HepG2 (cell line): ENCODE measurements at regions of chr17 and their contacts with region 1.

Region 1: DNA sequence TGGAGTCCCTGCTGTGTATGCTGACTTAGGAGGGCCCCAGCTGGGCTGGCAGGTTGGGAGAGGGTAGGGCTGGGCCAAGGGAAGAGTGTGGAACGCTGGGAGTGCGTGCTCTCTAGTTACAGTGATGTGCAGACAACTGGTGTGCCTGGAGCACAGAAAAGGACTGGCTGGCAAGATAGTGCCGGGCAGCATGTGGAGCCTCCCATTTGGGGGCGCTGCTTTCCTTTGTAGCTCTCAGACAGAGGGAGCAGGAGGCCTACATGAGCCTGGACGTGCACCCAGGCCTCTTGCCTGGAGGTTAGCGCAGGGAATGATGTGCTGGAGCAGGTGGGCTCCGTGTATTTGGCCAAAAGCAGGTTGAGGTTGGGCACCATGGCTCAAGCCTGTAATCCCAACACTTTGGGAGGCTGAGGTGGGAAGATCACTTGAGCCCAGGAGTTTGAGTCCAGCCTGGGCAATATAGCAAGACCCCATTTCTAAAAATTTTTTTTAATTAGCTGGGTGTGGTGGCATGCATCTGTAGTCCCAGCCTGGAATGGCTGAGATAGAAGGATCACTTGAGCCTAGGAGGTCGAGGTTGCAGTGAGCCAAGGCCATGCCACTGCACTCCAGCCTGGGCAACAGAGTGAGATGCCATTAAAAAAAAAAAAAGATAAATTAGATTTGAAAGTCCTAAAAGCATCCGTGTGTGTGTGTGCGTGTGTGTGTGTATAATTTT is 26.1 kb upstream of the TBX4 start:
- DNase-seq: peak; percentile 85
- ATAC-seq: peak; percentile 94
- H3K4me3 ChIP-seq: 0 out of 6 replicates have a peak overlapping the region, but pooled peaks of 1 of the 3 experiments have one; percentile 23
- H3K27ac ChIP-seq: peak overlapping the region; percentile 57
- H3K4me1 ChIP-seq: peaks cover 41% of the 10 kb centered on the region
- H3K27me3 ChIP-seq: no peaks in the 10 kb centered on the region
- CTCF ChIP-seq: peak; percentile 98
- EP300 ChIP-seq: 0 out of 4 replicates have a peak, but pooled peaks of 1 of the 2 experiments have one; percentile 28
- POLR2A ChIP-seq: no peak
- RAD21 ChIP-seq: peak; percentile 97

Region 2: DNA sequence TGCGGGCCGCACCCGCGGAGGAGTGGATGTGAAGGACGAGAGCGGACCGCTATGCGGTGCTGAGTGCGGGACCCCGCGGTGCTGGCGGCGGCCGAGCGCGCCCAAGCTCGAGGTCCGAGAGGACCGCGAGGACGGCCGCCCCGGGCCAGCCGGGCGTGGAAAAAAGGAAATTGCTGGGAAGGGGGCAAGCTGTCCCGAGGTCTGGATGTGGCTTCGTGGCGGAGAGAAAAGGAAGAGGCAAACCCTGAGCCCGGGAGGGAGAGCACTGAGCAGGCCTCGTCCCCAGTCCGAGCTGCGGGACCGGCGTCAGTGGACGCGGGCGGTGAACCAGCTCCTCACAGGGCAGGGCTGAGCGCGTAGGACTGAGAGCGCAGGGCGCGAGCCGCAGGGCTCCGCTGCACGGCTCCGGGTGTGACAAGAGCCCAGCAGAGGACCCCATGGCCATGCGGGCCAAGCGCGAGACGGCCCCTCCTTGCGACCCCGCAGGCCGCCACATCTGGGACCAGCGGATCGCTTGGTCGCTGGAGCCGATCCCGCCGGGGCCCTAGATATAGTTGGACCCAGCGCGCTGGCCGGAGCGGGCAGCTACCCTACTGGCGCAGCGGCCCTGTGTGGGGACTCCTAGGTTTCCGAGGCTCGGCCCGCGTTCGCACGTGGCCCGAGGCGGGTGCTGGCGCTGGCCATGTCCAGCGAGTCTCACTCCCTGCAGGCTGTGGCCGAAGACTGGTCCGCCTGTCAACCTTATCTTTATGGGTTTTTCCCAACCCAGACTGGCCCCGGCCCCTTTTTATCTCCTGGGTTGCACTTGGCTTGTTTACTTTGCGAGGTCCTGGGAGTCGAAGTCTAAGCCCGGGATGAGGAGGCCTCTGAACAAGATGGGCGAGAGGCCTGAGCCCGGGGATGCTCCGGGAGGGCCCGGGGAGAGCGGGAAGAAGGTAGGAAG is 28.5 kb after region 1 on chr17:
- CTCF ChIA-PET with region 1: no interaction called
- POLR2A ChIA-PET with region 1: no interaction called
- in situ Hi-C with region 1: no loop called
- intact Hi-C with region 1: loop called (anchors 1 kb)
- DNase-seq: peak; percentile 88
- ATAC-seq: peak; percentile 85
- H3K4me3 ChIP-seq: no peak overlapping the region; a peak in 1 of 6 replicates
- H3K27ac ChIP-seq: peak overlapping the region; percentile 15
- H3K4me1 ChIP-seq: peaks cover 37% of the 10 kb centered on the region
- H3K27me3 ChIP-seq: no peaks in the 10 kb centered on the region
- CTCF ChIP-seq: no peak
- EP300 ChIP-seq: peak in 1 of 2 experiments; percentile 88; a peak in 2 of 4 replicates
- POLR2A ChIP-seq: no peak
- RAD21 ChIP-seq: peak; percentile 31; the same call in 1 of the 2 replicates

Region 3: GRCh38 chr17:61461967-61462718 is 36.0 kb after region 1 on chr17:
- CTCF ChIA-PET with region 1: no interaction called
- POLR2A ChIA-PET with region 1: interaction called, 12 read pairs
- in situ Hi-C with region 1: no loop called
- intact Hi-C with region 1: loop called (anchors 1 kb)
- DNase-seq: peak; percentile 56
- ATAC-seq: peak; percentile 45
- H3K4me3 ChIP-seq: peak overlapping the region; percentile 46 to 62 (median 61)
- H3K27ac ChIP-seq: peak overlapping the region; percentile 69
- H3K4me1 ChIP-seq: peaks cover 71% of the 10 kb centered on the region
- H3K27me3 ChIP-seq: no peaks in the 10 kb centered on the region
- CTCF ChIP-seq: no peak
- EP300 ChIP-seq: no peak
- POLR2A ChIP-seq: no peak
- RAD21 ChIP-seq: no peak

Region 4: DNA sequence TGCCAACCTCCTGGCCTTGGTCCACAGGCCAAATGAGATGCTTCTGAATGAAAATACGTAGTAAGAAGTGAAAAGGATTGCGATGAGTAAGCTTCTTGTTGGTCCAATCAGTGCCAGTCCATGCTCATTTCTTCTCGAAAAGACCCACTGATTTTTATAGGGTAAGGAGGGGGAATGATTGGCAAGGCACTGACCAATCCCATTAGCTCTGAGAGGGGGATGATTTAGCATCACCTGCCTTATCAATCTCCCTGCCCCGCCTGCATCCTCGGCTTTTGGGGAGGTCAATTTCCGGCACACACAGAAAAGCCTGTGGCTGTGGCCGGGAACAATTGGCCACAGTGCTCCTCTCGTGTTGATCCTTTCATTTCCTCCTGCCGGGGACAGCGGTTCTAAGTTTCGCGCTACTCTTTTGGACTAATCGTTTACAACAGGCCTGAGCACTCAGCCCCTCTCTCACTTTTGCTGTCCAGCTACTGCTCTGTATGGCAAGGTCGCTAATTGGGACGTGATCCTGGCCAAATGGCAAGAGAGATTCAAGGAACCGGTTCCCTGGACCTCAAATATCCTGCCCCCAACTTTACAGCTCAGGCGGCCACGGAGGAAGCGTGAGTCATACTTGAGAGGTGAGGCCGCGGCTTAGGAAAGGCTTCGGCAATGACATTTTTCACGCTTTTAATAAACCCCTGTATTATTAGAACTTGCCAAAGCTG is 69.1 kb after region 1 on chr17:
- CTCF ChIA-PET with region 1: no interaction called
- POLR2A ChIA-PET with region 1: no interaction called
- in situ Hi-C with region 1: no loop called
- intact Hi-C with region 1: loop called (anchors 1 kb)
- DNase-seq: no peak
- ATAC-seq: no peak
- H3K4me3 ChIP-seq: no peak overlapping the region
- H3K27ac ChIP-seq: no peak overlapping the region
- H3K4me1 ChIP-seq: peaks cover 76% of the 10 kb centered on the region
- H3K27me3 ChIP-seq: no peaks in the 10 kb centered on the region
- CTCF ChIP-seq: no peak
- EP300 ChIP-seq: no peak
- POLR2A ChIP-seq: no peak
- RAD21 ChIP-seq: no peak

Region 5: GRCh38 chr17:61551255-61551742 is 125.1 kb after region 1 on chr17:
- CTCF ChIA-PET with region 1: interaction called, 10 read pairs
- POLR2A ChIA-PET with region 1: no interaction called
- in situ Hi-C with region 1: loop called (anchors 10 kb)
- intact Hi-C with region 1: loop called (anchors 1 kb)
- DNase-seq: peak; percentile 62
- ATAC-seq: peak; percentile 74
- H3K4me3 ChIP-seq: no peak overlapping the region; a peak in 1 of 6 replicates
- H3K27ac ChIP-seq: no peak overlapping the region
- H3K4me1 ChIP-seq: peaks cover 7% of the 10 kb centered on the region
- H3K27me3 ChIP-seq: no peaks in the 10 kb centered on the region; a peak in 1 of 5 replicates
- CTCF ChIP-seq: peak; percentile 83
- EP300 ChIP-seq: no peak
- POLR2A ChIP-seq: no peak
- RAD21 ChIP-seq: peak; percentile 84